CD14-positive monocyte (primary cell): ENCODE measurements at regions of chr6 and their contacts with region 1.

Region 1: DNA sequence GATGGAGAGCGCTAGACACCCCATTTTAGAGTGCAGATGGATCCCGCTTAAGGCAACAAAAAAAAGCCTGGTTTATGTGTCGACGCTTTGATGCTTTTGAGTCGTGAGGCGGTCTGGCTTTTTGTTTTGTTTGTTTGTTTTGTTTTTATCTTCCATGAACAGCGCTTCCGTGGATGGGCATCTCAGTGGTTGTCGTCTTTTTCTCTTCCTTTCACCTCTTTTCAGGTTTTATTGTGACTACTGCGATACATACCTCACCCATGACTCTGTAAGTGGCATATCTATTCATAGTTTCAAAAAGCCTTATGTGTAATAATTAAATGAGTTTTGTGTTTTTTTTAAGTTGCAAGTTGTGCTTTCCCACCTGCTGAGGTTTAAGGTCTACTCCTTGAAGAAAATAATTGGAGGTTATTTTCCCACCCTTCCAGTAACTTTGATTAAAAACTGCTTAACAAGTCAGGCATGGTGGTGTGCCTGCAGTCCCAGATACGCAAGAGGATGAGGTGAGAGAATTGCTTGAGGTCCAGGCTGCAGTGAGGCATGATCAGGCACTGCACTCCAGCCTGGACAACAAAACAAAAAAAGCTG is 476 bp downstream of the SNRPC start:
- DNase-seq: no peak
- H3K4me3 ChIP-seq: peak overlapping the region; percentile 82 to 98 (median 92)
- H3K4me3 Mint-ChIP-seq: no peak overlapping the region
- H3K27ac ChIP-seq: peak overlapping the region; percentile 90 to 97
- H3K27ac Mint-ChIP-seq: no peak overlapping the region
- H3K4me1 ChIP-seq: peaks cover 15 to 33% of the 10 kb centered on the region in 2 donors
- H3K4me1 Mint-ChIP-seq: peaks cover 10% of the 10 kb centered on the region
- H3K27me3 ChIP-seq: no peaks in the 10 kb centered on the region
- H3K27me3 Mint-ChIP-seq: peaks cover 0 to 4% (median 3%) of the 10 kb centered on the region in 3 donors
- CTCF ChIP-seq: no peak

Region 2: DNA sequence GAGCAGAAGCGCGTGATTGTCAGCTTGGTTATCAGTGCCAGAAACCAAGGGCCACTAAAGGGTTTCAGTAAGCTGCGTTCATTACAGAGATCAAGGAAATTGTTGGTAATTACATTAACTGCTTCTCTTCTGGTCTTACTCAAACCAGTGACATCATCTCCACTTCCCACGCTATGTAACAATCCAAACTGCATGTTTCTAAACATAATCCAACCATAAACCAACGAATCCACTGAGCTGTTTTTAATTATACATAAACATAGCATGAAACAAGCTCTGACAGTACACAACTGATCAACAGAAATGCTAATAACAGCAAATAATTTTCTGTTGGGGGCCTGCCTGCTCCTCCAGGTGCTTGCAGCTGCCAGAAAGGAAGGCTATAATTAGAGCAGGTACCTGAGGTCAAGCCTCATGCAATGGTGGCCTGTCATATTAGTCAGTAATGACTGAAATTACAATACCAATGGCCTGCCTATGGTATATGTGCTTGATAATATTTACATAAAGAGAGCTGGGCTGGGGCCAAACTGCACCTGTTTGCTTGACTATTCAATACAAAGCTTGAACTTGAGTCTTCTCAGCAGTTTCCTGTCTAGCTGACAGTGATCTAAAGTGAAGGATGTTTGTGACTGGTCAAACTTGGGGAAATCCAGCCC is 101.3 kb before region 1 on chr6:
- intact Hi-C with region 1: loop called in 1 of 2 experiments (anchors 2 kb)
- DNase-seq: peak in 2 of 3 donors; percentile 30 to 55
- H3K4me3 ChIP-seq: peak overlapping the region in 1 of 3 experiments; percentile 71
- H3K4me3 Mint-ChIP-seq: peak overlapping the region; percentile 35 to 65
- H3K27ac ChIP-seq: peak overlapping the region; percentile 12 to 79
- H3K27ac Mint-ChIP-seq: peak overlapping the region; percentile 78 to 93 (median 87)
- H3K4me1 ChIP-seq: peaks cover 36 to 47% of the 10 kb centered on the region in 2 donors
- H3K4me1 Mint-ChIP-seq: peaks cover 48% of the 10 kb centered on the region
- H3K27me3 ChIP-seq: no peaks in the 10 kb centered on the region
- H3K27me3 Mint-ChIP-seq: peaks cover 0 to 2% (median 0%) of the 10 kb centered on the region in 3 donors
- CTCF ChIP-seq: no peak

Region 3: GRCh38 chr6:34671801-34672656 is 85.8 kb before region 1 on chr6:
- intact Hi-C with region 1: no loop called
- DNase-seq: peak; percentile 81 to 88 (median 82)
- H3K4me3 ChIP-seq: peak overlapping the region in 2 of 3 experiments; percentile 9 to 52
- H3K4me3 Mint-ChIP-seq: peak overlapping the region; percentile 54 to 76
- H3K27ac ChIP-seq: peak overlapping the region; percentile 75 to 93
- H3K27ac Mint-ChIP-seq: peak overlapping the region; percentile 91 to 97 (median 95)
- H3K4me1 ChIP-seq: peaks cover 36 to 52% of the 10 kb centered on the region in 2 donors
- H3K4me1 Mint-ChIP-seq: peaks cover 55% of the 10 kb centered on the region
- H3K27me3 ChIP-seq: no peaks in the 10 kb centered on the region
- H3K27me3 Mint-ChIP-seq: no peaks in the 10 kb centered on the region
- CTCF ChIP-seq: no peak

Region 4: DNA sequence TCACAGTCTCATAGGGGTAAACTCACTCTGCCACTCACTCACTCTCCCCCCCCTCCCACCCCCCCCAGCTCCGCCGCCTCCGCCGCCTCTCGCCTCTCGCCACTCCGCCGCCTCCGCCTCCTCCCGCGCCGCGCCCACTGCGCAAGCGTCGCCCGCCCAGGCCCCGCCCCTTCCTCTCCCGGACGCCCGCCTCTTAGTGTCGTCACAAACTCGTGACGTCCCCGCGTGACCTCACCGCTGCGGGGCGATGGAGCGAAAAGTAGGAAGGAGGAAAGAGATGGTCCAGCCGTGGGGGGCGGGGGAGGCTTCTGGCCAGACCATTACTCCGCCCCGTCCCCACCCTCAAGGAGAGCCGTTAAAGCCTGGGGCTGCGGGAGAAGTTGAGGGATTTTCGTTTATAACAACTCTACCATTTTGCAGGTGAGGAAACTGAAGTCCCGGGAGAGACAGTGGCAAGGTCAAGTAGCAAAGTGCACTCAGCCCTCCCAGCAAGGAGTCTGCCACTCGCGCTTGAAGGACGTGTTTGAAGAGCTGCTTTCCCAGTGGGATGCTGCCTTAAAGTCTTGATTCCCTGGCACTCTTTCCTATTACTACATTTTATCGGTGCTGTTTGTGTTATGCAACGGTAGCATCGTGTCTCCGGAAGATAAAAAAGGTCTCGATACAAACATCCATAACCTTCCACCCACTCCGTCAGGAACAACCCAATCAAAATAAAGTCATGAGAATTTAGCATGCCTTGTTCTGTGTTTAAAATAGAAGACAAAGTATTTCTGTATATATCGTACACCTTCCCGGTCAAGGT is 60.8 kb before region 1 on chr6 and contains the start of gene ILRUN:
- intact Hi-C with region 1: loop called in 1 of 2 experiments (anchors 10 kb)
- DNase-seq: peak; percentile 91 to 97 (median 96)
- H3K4me3 ChIP-seq: peak within 1 kb of the TSS; percentile 87 to 96 (median 94)
- H3K4me3 Mint-ChIP-seq: peak within 1 kb of the TSS; percentile 96 to 100
- H3K27ac ChIP-seq: peak within 1 kb of the TSS; percentile 86 to 95
- H3K27ac Mint-ChIP-seq: peak within 1 kb of the TSS; percentile 95 to 99 (median 98)
- H3K4me1 ChIP-seq: peaks cover 29 to 36% of the 10 kb centered on the region in 2 donors
- H3K4me1 Mint-ChIP-seq: peaks cover 40% of the 10 kb centered on the region
- H3K27me3 ChIP-seq: no peaks in the 10 kb centered on the region
- H3K27me3 Mint-ChIP-seq: peaks cover 0 to 2% (median 1%) of the 10 kb centered on the region in 3 donors
- CTCF ChIP-seq: no peak
- polyA plus RNA-seq, gene ILRUN: 6.2 to 19.3 (median 6.5) TPM

Region 5: DNA sequence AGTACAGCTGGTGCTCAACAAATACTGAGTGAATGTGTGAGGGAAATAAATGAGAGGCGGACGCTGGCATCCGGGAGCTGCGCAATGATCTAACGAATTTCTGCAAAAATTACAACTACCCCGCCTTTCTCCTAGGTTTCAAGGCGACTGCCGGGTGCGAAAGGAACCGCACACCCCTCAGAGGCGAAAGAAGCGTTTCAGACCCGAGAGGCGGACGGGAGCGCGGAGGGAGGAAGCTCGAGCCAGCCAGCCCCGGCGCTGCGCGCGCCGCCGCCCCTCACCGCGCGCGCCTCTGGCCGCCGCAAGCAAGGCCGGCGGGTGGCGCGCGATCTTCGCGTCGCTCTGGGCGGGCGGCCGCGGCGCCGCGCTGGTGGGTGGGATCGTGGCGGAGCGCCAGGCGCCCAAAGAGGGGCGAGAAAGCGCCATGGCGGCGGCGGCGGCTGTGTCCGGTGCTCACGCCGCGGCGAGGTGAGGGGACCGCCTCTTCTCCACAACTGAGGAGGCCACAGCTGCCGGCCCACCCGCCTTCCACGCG is 34.0 kb after region 1 on chr6 and contains the start of gene BLTP3A:
- intact Hi-C with region 1: loop called (anchors 5 kb)
- DNase-seq: peak; percentile 54 to 72 (median 64)
- H3K4me3 ChIP-seq: peak within 1 kb of the TSS; percentile 71 to 96 (median 88)
- H3K4me3 Mint-ChIP-seq: peak within 1 kb of the TSS; percentile 98
- H3K27ac ChIP-seq: peak within 1 kb of the TSS; percentile 88 to 96
- H3K27ac Mint-ChIP-seq: peak within 1 kb of the TSS; percentile 94 to 99 (median 97)
- H3K4me1 ChIP-seq: peaks cover 15 to 26% of the 10 kb centered on the region in 2 donors
- H3K4me1 Mint-ChIP-seq: peaks cover 28% of the 10 kb centered on the region
- H3K27me3 ChIP-seq: no peaks in the 10 kb centered on the region
- H3K27me3 Mint-ChIP-seq: peaks cover 0 to 5% (median 0%) of the 10 kb centered on the region in 3 donors
- CTCF ChIP-seq: no peak
- polyA plus RNA-seq, gene BLTP3A: 1.0 to 7.2 (median 1.2) TPM

Region 6: DNA sequence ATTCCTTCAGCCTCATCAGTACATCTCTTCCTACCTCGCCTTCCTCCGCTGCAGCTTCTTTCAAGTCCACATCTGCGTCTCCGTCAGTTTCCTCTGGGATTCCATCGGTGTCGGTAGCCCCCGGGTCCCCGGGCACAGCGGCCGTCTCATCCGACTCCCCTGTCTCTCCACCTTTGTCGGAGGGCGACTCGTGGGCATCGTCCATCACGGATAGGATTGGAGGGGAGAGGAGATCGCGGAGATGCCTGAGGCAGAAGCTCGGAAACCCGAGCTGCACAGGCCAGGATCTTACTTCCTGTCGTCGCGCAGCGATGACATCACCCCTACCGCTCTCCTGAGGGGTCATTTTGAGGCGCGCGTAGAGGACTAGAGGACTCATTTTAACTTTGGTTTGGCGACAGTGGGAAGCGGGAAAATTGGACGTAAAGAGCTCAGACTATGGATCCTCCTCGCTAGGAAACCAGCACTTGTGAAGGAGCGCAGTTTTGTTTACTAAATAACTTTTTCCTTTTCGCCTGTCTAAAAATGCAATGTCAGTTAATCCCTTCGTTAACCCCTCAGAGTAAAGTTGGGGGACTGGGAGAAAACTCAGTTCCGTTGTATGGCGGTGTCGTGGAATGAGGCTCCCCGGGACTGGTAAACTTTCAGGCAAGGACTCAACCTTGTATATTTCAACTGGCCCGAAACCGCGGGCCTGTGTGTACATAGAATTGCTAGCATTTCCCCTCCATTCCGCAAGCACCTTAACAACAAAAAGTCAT is 130.2 kb after region 1 on chr6 and contains the start of gene TAF11:
- intact Hi-C with region 1: loop called (anchors 2 to 10 kb)
- DNase-seq: peak; percentile 89 to 93 (median 89)
- H3K4me3 ChIP-seq: peak within 1 kb of the TSS; percentile 84 to 97 (median 96)
- H3K4me3 Mint-ChIP-seq: peak within 1 kb of the TSS; percentile 99
- H3K27ac ChIP-seq: peak within 1 kb of the TSS; percentile 83 to 90
- H3K27ac Mint-ChIP-seq: peak within 1 kb of the TSS; percentile 98 to 100 (median 98)
- H3K4me1 ChIP-seq: peaks cover 26 to 41% of the 10 kb centered on the region in 2 donors
- H3K4me1 Mint-ChIP-seq: peaks cover 33% of the 10 kb centered on the region
- H3K27me3 ChIP-seq: no peaks in the 10 kb centered on the region
- H3K27me3 Mint-ChIP-seq: no peaks in the 10 kb centered on the region
- CTCF ChIP-seq: no peak
- polyA plus RNA-seq, gene TAF11: 22.9 to 29.9 (median 26.0) TPM

Region 7: DNA sequence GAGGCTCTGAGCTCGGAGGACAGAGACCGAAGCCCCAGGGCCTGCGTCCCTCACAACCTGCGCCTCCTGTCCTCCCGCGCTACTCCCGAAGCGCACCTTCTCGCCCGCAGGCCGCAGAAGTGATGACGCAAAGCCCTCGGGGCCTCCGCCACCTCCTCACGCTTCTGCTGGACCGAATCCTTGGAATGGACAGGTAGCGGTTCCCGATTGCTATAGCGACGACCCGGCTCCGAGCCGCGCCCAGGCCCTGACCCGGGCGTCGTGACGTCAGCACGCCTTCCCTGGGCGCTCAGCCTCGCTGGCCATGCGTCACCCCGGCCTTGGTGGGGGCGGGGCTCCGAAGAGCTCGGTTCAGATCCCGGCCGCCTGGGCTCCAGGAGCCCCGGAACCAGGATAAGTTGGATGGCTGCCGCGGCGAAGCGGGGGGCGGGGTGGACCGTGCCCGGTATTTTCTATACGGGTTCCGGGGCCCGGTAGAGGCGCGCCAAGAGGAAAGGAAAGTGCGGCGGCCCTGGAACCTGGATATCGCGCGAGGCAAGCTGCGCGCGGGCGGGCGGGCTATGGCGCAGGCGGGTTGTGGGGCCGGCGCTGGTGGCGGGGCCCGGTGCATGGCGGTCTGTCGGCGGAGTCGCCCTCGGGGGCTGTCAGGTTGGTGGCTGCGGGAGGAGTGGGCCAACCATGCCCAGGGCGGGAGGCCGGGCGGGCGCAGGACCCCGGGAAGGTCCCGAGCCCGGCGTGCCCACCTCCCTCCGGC is 501.6 kb after region 1 on chr6 and contains the start of gene ZNF76:
- intact Hi-C with region 1: loop called in 1 of 2 experiments (anchors 10 kb)
- DNase-seq: peak; percentile 94 to 96 (median 96)
- H3K4me3 ChIP-seq: peak within 1 kb of the TSS; percentile 44 to 86 (median 62)
- H3K4me3 Mint-ChIP-seq: peak within 1 kb of the TSS; percentile 97 to 98
- H3K27ac ChIP-seq: peak within 1 kb of the TSS; percentile 84 to 93
- H3K27ac Mint-ChIP-seq: peak within 1 kb of the TSS; percentile 97 to 99 (median 99)
- H3K4me1 ChIP-seq: peaks cover 36 to 44% of the 10 kb centered on the region in 2 donors
- H3K4me1 Mint-ChIP-seq: peaks cover 45% of the 10 kb centered on the region
- H3K27me3 ChIP-seq: no peaks in the 10 kb centered on the region
- H3K27me3 Mint-ChIP-seq: peaks cover 0 to 2% (median 1%) of the 10 kb centered on the region in 3 donors
- CTCF ChIP-seq: no peak
- polyA plus RNA-seq, gene ZNF76: 6.8 to 49.7 (median 9.6) TPM